ENCODE measurements at regions of chr2 and their contacts with region 1.

Region 1: DNA sequence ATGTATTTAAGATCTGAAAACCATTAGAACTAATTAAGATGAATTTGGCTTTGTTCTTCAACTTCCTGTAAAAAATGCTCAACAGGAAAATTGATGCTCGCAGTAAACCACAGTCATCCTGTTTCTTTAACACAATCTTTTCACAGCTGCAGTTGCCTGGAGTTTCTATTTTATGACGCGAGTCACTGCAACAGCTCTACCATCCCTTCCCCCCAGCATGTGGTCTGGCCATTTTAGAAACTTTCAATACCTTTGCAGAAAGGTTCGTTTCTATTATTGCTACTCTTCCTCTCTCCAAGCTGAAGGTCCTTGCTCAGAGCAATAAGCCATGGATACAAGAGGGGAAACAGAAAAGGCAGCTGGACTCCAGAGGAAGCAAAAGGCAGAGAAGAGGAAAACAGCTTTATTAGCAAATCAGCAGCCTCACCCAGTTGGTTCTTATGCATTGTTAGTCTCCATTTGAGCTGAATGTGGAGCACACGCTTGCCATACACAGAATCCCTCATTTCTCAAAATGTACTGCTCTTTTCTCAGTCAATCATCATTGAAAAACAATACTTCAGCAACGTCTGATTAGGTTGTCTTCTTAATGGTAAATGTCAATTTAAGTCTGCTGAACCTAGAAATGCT is 3.9 kb downstream of the WIPF1 start:
- DNase-seq: peak; percentile 88
- ATAC-seq: peak; percentile 66
- H3K4me3 ChIP-seq: peak overlapping the region; percentile 53 to 92 (median 71)
- H3K4me3 Mint-ChIP-seq: peak overlapping the region; percentile 93
- H3K27ac ChIP-seq: peak overlapping the region; percentile 93 to 98
- H3K27ac Mint-ChIP-seq: peak overlapping the region; percentile 96
- H3K4me1 ChIP-seq: peaks cover 63 to 65% of the 10 kb centered on the region in 2 donors
- H3K4me1 Mint-ChIP-seq: peaks cover 65% of the 10 kb centered on the region
- H3K27me3 ChIP-seq: no peaks in the 10 kb centered on the region
- H3K27me3 Mint-ChIP-seq: no peaks in the 10 kb centered on the region
- CTCF ChIP-seq: no peak

Region 2: GRCh38 chr2:174610243-174610995 is 16.7 kb after region 1 on chr2:
- CTCF ChIA-PET with region 1: interaction called, 12 read pairs
- POLR2A ChIA-PET with region 1: interaction called, 27 read pairs
- intact Hi-C with region 1: loop called (anchors 1 kb)
- DNase-seq: no peak
- ATAC-seq: no peak
- H3K4me3 ChIP-seq: no peak overlapping the region
- H3K4me3 Mint-ChIP-seq: peak overlapping the region; percentile 60
- H3K27ac ChIP-seq: peak overlapping the region; percentile 75 to 94
- H3K27ac Mint-ChIP-seq: peak overlapping the region; percentile 88
- H3K4me1 ChIP-seq: peaks cover 72 to 86% of the 10 kb centered on the region in 2 donors
- H3K4me1 Mint-ChIP-seq: peaks cover 91% of the 10 kb centered on the region
- H3K27me3 ChIP-seq: no peaks in the 10 kb centered on the region
- H3K27me3 Mint-ChIP-seq: no peaks in the 10 kb centered on the region
- CTCF ChIP-seq: no peak